ENCODE measurements at regions of chr7 and their contacts with region 1.

Region 1: DNA sequence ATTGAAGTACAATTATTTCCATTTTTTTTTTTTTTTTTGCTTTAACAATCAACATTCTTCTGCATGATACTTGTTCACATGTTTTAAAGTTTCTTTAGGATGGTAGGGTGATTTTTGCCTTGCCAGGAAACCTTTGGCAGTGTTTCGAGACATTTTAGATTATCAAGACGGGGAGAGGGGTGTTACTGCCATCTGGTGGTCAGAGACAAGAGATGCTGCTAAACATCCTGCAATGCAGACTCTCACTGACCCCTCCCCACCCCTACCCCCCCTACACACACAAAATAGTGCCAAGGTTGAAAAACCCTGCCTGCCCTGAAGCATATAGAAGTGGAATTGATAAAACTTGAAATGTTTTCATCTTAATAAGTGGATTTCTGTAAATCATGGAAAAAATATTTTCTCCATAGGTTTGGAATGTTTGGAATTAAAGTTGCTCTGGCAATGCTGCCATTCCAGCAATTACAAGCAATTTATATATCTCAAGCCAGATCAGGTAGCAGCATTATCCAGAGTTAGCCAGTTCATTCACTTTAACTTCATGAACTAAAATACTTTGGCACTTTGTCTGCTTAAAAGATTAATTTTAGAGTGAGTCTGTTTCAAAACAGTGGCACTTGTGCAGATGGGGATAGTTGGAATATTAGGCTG is 62.1 kb downstream of the SDHAF3 start:
- DNase-seq: peak; percentile 71 to 80 (median 76)
- ATAC-seq: peak; percentile 96
- H3K4me3 ChIP-seq: no peak overlapping the region
- H3K27ac ChIP-seq: no peak overlapping the region
- H3K4me1 ChIP-seq: no peaks in the 10 kb centered on the region
- H3K27me3 ChIP-seq: no peaks in the 10 kb centered on the region
- CTCF ChIP-seq: peak; percentile 70 to 82 (median 71)
- EP300 ChIP-seq: no peak
- POLR2A ChIP-seq: no peak
- RAD21 ChIP-seq: peak; percentile 62 to 65

Region 2: DNA sequence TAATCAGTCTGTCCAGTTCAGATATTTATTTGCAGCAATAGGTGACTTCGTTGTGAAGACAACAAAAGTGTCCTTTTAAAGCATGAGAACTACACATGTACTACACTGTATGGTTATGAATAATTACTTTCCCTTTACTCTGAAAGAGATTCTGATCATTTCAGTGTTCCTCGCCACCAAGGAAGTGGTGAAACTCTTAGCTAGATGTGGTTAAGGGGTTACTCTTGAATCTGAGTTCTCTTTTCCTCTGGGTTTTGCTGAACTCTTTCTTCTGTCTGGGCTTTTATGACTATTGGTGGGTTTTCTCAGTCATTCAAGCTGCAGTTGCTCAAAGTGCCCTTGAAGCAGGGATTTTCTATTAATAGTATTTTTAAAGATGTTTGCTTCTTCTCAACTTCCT is 342.0 kb before region 1 on chr7:
- CTCF ChIA-PET with region 1: no interaction called
- POLR2A ChIA-PET with region 1: no interaction called
- in situ Hi-C with region 1: no loop called
- intact Hi-C with region 1: no loop called
- DNase-seq: no peak
- ATAC-seq: no peak
- H3K4me3 ChIP-seq: no peak overlapping the region
- H3K27ac ChIP-seq: no peak overlapping the region
- H3K4me1 ChIP-seq: no peaks in the 10 kb centered on the region
- H3K27me3 ChIP-seq: no peaks in the 10 kb centered on the region
- CTCF ChIP-seq: no peak
- EP300 ChIP-seq: no peak
- POLR2A ChIP-seq: no peak
- RAD21 ChIP-seq: no peak

Region 3: DNA sequence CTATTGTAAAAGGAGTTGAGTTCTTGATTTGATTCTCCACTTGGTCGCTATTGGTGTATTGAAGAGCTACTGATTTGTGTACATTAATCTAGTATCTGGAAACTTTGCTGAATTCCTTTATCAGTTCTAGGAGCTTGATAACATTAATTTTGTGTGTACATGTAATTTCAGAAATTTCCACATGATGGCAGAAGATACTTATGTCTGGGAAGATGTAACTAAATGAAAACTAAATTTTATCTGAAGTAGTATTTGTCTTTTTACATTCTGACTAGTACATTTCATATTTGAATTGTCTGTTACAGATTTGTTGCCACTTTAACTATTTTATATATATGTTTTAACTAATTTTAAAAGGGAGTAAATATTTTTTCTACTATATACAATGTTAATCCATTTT is 34.5 kb before region 1 on chr7:
- CTCF ChIA-PET with region 1: interaction called, 3 read pairs
- POLR2A ChIA-PET with region 1: no interaction called
- in situ Hi-C with region 1: no loop called
- intact Hi-C with region 1: loop called (anchors 1 kb)
- DNase-seq: peak in 1 of 4 experiments; percentile 36
- ATAC-seq: peak; percentile 65; the same call in 2 of the 3 replicates
- H3K4me3 ChIP-seq: no peak overlapping the region
- H3K27ac ChIP-seq: no peak overlapping the region
- H3K4me1 ChIP-seq: no peaks in the 10 kb centered on the region
- H3K27me3 ChIP-seq: no peaks in the 10 kb centered on the region
- CTCF ChIP-seq: peak in 2 of 3 experiments; percentile 28 to 70; a peak in 3 of 6 replicates
- EP300 ChIP-seq: no peak
- POLR2A ChIP-seq: no peak
- RAD21 ChIP-seq: peak; percentile 64 to 78

Region 4: DNA sequence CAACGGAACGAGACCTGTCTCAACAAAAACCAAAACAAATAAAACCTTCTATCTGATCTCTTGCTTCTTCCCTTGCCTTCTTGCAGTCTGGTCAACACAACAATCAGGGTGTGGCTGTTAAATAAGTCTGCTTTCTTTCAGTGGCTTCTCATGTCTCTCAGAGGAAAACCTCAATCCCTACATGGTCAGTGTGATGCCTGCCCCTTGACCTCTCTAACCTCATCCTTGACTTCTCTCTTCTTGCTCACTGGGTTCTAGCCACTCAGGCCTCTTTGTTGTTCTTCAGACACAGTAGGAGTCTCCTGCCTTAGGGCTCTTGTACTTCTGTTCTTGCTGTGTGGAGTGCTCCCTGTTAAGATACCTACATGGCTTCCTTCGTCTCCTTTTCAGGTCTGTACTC is 158.3 kb after region 1 on chr7:
- CTCF ChIA-PET with region 1: no interaction called
- POLR2A ChIA-PET with region 1: no interaction called
- in situ Hi-C with region 1: no loop called
- intact Hi-C with region 1: no loop called
- DNase-seq: no peak
- ATAC-seq: no peak; the same call in 1 of the 3 replicates
- H3K4me3 ChIP-seq: no peak overlapping the region
- H3K27ac ChIP-seq: no peak overlapping the region
- H3K4me1 ChIP-seq: no peaks in the 10 kb centered on the region; a peak in 1 of 5 replicates
- H3K27me3 ChIP-seq: no peaks in the 10 kb centered on the region
- CTCF ChIP-seq: no peak
- EP300 ChIP-seq: no peak
- POLR2A ChIP-seq: no peak
- RAD21 ChIP-seq: no peak

Measured in K562 (cell line).